Activated CD4-positive, alpha-beta T cell treated with anti-CD3 and anti-CD28 coated beads for 36 hours (primary cell): ENCODE measurements at regions of chr5 and their contacts with region 1.

Region 1: DNA sequence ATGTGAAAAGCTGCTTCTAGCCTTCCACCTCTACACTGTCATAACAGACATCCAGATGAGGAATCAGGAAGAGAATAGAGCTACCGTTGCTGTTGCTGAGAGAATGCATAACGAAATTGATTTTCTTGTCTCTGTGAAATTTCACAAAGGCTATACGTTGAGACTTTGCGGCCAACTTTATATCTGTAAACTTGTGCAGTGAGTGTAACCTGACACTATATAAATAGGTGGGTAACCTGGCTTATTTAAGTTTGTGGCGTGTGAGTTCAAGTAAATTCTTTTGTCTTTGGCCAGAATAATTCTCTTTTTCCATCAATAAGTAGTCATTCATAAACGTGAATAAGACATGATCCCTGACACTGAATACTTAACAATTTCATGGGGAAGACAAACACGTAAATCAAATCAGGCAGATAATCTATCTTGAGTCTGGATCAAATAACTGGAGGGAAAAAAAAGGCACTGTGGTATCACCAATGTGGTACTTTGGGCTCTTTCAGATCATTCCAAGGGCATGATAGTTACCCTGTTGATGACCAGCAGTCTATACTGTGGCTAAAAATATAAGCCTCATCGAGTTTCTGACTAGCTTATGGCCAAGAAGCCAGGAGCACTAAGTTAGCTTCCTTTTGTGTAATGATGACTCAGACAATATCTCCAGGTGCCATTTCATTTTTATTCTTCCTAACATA is 98.2 kb upstream of the RASA1 start:
- DNase-seq: no peak
- ATAC-seq: no peak
- H3K4me3 Mint-ChIP-seq: no peak overlapping the region
- H3K27ac Mint-ChIP-seq: no peak overlapping the region
- H3K4me1 Mint-ChIP-seq: no peaks in the 10 kb centered on the region
- H3K27me3 Mint-ChIP-seq: no peaks in the 10 kb centered on the region

Region 2: DNA sequence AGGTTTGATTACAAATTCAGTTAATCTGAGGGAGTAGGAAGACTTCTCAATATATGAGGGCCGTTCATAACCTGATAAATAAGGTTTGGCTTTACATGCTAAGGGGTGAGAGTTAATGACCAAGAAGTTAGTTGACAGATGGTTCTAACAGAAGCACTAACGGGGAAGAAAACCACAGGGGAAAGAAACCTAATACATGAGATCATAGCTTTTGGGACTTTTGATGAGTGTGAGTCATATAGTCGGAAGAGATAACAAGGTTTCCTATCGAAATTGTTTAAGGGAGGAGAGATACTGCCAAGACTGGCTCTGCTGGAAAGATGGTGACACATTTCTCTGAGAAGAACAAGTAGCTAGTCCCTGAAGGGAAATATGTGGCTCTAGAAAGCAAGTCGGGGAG is 411.6 kb before region 1 on chr5:
- CTCF ChIA-PET with region 1: no interaction called
- POLR2A ChIA-PET with region 1: no interaction called
- intact Hi-C with region 1: no loop called
- DNase-seq: no peak
- ATAC-seq: no peak
- H3K4me3 Mint-ChIP-seq: no peak overlapping the region
- H3K27ac Mint-ChIP-seq: no peak overlapping the region
- H3K4me1 Mint-ChIP-seq: no peaks in the 10 kb centered on the region
- H3K27me3 Mint-ChIP-seq: peaks cover 7% of the 10 kb centered on the region

Region 3: DNA sequence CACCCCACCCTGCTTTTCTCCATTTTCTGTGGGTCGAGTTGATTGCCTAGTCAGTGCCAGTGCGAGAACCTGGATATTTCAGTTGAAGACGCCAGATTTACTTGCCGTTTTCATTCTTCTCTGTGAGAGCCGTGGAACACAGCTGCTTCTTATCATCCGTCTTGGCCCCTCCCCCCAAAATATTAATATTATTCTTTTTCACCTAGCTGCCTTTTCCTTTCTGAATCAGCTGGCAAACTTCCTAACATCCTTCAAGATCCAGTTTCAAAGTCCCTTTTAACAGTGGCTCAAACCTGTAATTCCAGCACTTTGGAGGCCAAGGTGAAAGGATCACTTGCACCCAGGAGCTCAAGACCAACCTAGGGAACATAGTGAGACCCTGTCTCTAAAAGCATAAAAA is 18.8 kb before region 1 on chr5:
- CTCF ChIA-PET with region 1: interaction called, 4 read pairs
- POLR2A ChIA-PET with region 1: no interaction called
- intact Hi-C with region 1: loop called in 1 of 2 experiments (anchors 1 kb)
- DNase-seq: no peak
- ATAC-seq: no peak
- H3K4me3 Mint-ChIP-seq: no peak overlapping the region
- H3K27ac Mint-ChIP-seq: no peak overlapping the region
- H3K4me1 Mint-ChIP-seq: peaks cover 5% of the 10 kb centered on the region
- H3K27me3 Mint-ChIP-seq: no peaks in the 10 kb centered on the region